SK-N-SH (cell line): ENCODE measurements at regions of chr4 and their contacts with region 1.

Region 1: DNA sequence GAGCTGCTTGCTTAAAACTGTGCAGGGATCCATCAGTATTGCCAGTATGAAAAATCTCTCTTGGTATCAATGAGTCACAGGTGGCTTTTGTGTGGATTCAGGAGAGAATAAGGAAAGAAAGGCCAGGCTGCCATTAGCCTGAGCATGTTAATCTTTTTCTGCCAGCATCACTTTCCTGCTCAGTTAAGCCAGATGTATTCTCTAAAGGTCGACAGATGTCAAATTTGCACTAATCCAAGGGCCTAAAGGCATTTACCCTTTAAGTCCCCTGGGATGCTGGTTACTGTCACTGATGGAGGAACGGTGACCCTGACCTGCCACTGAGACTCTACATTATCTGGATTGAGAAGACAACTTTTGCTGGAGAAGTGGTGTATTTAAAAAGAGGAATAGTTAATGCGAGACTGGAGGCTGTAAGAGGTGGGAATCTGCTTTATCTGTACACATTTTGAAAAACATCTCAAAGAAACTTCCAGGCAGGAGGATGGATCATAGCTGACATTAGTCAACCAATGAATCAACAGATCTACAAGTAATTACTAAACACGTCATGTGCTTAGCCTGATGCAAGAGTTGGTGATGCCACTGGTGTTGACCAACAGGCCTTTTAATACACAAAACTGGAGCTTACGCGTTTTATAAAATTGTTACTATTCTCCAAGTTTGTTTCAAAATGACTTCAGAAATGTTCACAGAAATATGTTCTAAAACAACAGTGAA is 241.4 kb upstream of the ANXA3 start:
- DNase-seq: peak; percentile 57
- H3K4me3 ChIP-seq: no peak overlapping the region
- H3K27ac ChIP-seq: no peak overlapping the region
- H3K4me1 ChIP-seq: peaks cover 0 to 8% of the 10 kb centered on the region in 2 experiments; a peak in 2 of 4 replicates
- H3K27me3 ChIP-seq: no peaks in the 10 kb centered on the region
- CTCF ChIP-seq: no peak
- EP300 ChIP-seq: peak in 1 of 2 experiments; percentile 66; a peak in 1 of 4 replicates
- RAD21 ChIP-seq: no peak

Region 2: GRCh38 chr4:77773101-77773500 is 537.1 kb before region 1 on chr4:
- CTCF ChIA-PET with region 1: no interaction called
- POLR2A ChIA-PET with region 1: no interaction called
- DNase-seq: no peak
- H3K4me3 ChIP-seq: no peak overlapping the region
- H3K27ac ChIP-seq: no peak overlapping the region
- H3K4me1 ChIP-seq: peaks cover 0 to 2% of the 10 kb centered on the region in 2 experiments; a peak in 2 of 4 replicates
- H3K27me3 ChIP-seq: no peaks in the 10 kb centered on the region
- CTCF ChIP-seq: no peak
- EP300 ChIP-seq: no peak
- RAD21 ChIP-seq: no peak

Region 3: GRCh38 chr4:78297116-78297800 is 12.9 kb before region 1 on chr4:
- CTCF ChIA-PET with region 1: interaction called, 15 read pairs
- POLR2A ChIA-PET with region 1: no interaction called
- DNase-seq: no peak
- H3K4me3 ChIP-seq: no peak overlapping the region; a peak in 1 of 4 replicates
- H3K27ac ChIP-seq: peak overlapping the region; percentile 63 to 92; a peak in 3 of 4 replicates
- H3K4me1 ChIP-seq: peaks cover 14 to 41% of the 10 kb centered on the region in 2 experiments
- H3K27me3 ChIP-seq: no peaks in the 10 kb centered on the region
- CTCF ChIP-seq: no peak
- EP300 ChIP-seq: peak; percentile 19 to 67; a peak in 3 of 4 replicates
- RAD21 ChIP-seq: no peak